Sigmoid colon (tissue), 7 donors: ENCODE measurements at regions of chr10 and their contacts with region 1.

Region 1: DNA sequence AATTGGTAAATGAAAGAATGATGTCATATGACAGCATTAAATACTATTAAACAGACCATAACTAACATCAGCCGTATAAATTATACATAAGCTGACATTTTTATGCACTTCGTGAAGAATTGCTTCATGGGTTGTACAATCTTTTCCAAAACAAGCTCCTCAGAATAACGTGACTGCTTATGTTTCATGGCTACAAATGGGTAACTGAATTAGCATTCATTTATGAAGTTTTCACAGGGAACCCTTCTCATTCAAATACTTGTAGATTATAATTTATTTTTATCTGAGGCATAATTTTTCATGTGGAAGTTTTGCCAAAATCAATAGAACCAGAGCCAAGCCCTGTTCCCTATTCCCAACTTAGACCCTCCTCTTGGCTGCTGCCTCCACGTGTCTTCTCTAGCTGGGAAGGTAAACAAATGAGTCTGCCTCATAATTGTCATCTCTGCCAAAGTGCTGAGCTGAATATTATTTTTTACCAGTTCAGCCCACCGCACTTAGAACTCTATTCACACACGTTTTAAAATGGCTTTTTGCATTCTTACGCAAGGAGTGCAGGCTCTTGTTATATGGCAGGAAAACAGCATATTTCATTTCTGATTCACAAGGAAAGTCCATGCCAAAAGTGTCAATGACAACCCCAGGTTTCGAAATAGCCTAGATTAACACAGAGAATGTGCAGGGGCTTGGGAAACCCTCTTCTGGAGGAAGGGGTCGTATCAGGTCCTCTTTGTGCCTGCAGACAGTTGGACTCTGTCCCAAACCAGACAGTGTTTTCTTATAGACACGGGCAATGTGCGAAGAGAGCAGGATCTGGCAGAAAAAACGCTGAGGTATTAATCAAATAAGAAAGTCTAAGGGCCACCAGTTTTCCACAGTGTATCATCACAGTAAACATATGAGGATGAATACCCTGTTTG is 370.7 kb upstream of the MGMT start:
- DNase-seq: peak; percentile 77
- H3K4me3 ChIP-seq: peak overlapping the region in 1 of 4 donors; percentile 6
- H3K27ac ChIP-seq: peak overlapping the region; percentile 41 to 75 (median 67)
- H3K4me1 ChIP-seq: peaks cover 0 to 33% (median 27%) of the 10 kb centered on the region in 4 donors
- H3K27me3 ChIP-seq: no peaks in the 10 kb centered on the region
- CTCF ChIP-seq: no peak
- EP300 ChIP-seq: peak in 3 of 4 donors; percentile 64 to 77 (median 70)
- POLR2A ChIP-seq: no peak

Region 2: DNA sequence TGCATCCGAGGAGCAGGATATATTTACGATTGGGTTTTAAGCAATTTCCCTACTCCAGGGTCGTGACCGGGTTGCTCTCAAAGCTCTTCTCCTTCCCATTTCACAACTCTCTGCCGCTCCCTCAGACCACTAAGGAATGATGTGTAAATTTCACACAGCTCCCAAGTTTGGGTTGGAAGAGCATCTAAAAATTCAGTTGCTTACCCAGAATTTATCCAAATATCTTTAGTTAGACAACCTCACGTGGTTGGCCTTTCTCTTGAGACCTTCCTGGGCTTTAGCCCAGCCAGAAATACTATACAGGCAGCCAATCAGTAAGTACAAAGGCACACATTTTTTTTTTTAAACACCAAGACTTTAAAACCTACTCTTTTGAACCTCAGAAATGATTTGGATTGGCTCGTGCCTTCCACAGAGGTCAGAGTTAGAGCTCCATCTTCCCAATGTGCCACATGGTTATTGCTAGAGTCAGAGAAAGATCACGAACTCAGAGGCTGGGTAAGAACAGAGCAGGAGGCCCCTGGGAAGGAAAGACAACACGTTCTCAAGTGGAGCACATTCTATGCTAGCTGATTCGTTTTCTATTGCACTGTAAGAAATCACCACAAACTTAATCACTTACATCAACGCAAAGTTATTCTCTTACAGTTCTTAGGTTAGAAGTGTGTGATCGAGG is 35.3 kb after region 1 on chr10:
- intact Hi-C with region 1: no loop called
- DNase-seq: no peak
- H3K4me3 ChIP-seq: no peak overlapping the region
- H3K27ac ChIP-seq: no peak overlapping the region
- H3K4me1 ChIP-seq: no peaks in the 10 kb centered on the region
- H3K27me3 ChIP-seq: no peaks in the 10 kb centered on the region
- CTCF ChIP-seq: no peak
- EP300 ChIP-seq: no peak
- POLR2A ChIP-seq: no peak

Region 3: DNA sequence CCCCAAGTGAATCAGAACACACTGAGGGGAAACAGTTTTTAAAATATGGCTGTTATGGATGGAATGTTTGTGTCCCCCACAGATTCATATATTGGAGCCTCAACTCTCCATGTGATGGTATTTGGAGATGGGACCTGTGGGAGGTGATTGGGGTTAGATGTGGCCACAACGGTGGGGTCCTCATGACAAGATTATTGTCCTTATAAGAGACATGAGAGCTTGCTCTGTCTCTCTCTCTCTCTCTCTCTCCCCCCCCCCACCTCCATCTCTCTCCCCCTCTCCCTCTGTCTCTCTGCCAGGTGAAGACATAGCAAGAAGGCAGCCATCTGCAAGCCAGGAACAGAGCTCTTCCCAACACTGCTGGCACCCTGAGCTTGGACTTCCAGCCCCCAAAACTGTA is 55.0 kb after region 1 on chr10:
- intact Hi-C with region 1: no loop called
- DNase-seq: no peak
- H3K4me3 ChIP-seq: no peak overlapping the region
- H3K27ac ChIP-seq: no peak overlapping the region
- H3K4me1 ChIP-seq: no peaks in the 10 kb centered on the region
- H3K27me3 ChIP-seq: no peaks in the 10 kb centered on the region
- CTCF ChIP-seq: no peak
- EP300 ChIP-seq: no peak
- POLR2A ChIP-seq: no peak

Region 4: DNA sequence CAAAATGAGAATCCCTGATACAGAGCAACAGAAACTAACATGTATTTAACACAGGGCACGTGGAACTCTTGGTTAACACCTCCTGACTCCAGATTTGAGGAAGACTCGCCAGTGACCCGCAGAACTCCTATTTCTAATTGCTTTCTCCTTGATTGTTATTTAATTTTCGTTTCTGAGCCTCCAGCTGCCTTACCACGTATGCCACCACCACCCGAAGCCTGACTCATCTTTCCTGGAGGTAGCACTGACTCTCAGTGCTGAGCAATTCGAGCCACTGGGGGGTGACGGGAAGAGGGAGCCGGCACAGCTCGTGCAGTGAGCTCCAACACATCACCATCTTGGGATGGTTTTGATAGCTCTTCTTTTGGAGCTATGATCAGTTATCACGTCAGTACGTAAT is 96.8 kb after region 1 on chr10:
- intact Hi-C with region 1: loop called (anchors 5 kb)
- DNase-seq: peak; percentile 66
- H3K4me3 ChIP-seq: no peak overlapping the region
- H3K27ac ChIP-seq: peak overlapping the region in 3 of 4 donors; percentile 35 to 55 (median 38)
- H3K4me1 ChIP-seq: peaks cover 0 to 21% (median 20%) of the 10 kb centered on the region in 4 donors
- H3K27me3 ChIP-seq: no peaks in the 10 kb centered on the region
- CTCF ChIP-seq: no peak
- EP300 ChIP-seq: no peak
- POLR2A ChIP-seq: no peak

Region 5: GRCh38 chr10:129236274-129236691 is 140.0 kb after region 1 on chr10:
- intact Hi-C with region 1: no loop called
- DNase-seq: no peak
- H3K4me3 ChIP-seq: no peak overlapping the region
- H3K27ac ChIP-seq: no peak overlapping the region
- H3K4me1 ChIP-seq: no peaks in the 10 kb centered on the region
- H3K27me3 ChIP-seq: no peaks in the 10 kb centered on the region
- CTCF ChIP-seq: no peak
- EP300 ChIP-seq: no peak
- POLR2A ChIP-seq: no peak

Region 6: DNA sequence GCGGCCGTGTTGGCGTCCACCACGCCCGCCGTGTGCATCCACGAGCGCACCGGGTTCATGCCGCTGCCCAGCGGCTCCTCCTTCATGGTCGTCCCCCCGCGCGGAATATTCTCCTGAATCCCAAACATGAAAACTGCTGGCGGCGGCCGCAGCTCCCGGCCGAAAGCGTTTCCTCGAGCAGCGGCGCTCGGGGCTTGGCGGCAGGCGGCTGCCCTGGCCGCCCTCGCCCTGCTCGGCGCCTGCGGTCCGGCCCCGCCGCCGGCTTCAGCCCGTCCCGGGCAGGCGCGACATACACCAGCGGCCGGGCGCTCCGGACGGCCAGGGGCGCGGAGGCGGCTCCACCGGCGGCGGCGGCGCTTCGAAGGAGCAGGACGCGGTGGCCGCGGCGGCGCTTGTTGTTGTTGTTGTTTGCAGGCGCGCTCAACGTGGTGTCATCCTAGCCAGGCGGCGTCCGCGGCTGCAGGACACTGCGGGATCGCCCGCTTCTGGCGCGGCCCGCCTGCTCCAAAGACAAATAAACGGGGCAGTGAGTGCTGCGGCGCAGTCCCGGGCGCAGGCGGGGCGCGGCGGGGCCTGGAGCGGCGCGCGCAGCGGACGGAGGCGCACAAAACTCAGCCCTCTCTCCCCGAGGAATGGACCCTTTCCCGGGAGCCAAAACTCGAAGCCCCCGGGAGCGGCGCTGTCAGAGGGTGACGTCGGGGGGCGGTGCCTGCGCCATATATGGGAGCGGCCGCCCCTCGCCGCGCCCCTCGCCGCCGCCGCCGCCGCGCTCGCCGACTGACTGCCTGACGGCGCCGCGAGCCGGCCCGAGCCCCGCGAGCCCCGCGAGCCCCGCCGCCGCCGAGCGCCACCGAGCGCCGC is 867.5 kb after region 1 on chr10 and contains the start of gene EBF3:
- intact Hi-C with region 1: loop called (anchors 5 kb)
- DNase-seq: peak; percentile 84
- H3K4me3 ChIP-seq: peak within 1 kb of the TSS; percentile 29 to 60 (median 50)
- H3K27ac ChIP-seq: peak within 1 kb of the TSS; percentile 54 to 78 (median 68)
- H3K4me1 ChIP-seq: peaks cover 0 to 65% (median 56%) of the 10 kb centered on the region in 4 donors
- H3K27me3 ChIP-seq: peaks cover 74 to 98% (median 87%) of the 10 kb centered on the region in 3 donors
- CTCF ChIP-seq: no peak
- EP300 ChIP-seq: no peak
- POLR2A ChIP-seq: no peak
- total RNA-seq, gene EBF3: 4.3 to 8.9 (median 5.8) TPM